Panc1 (cell line): ENCODE measurements at regions of chr11 and their contacts with region 1.

Region 1: GRCh38 chr11:9265211-9266131 is at the start of gene DENND5A:
- DNase-seq: peak; percentile 27
- ATAC-seq: peak; percentile 93
- H3K4me3 ChIP-seq: peak within 1 kb of the TSS; percentile 74 to 98
- H3K27ac ChIP-seq: peak within 1 kb of the TSS; percentile 92
- H3K4me1 ChIP-seq: peaks cover 30% of the 10 kb centered on the region
- H3K27me3 ChIP-seq: no peaks in the 10 kb centered on the region
- CTCF ChIP-seq: no peak; the same call in 1 of the 2 replicates
- total RNA-seq, gene DENND5A: 136 TPM

Region 2: GRCh38 chr11:9203691-9204311 is 61.7 kb before region 1 on chr11:
- CTCF ChIA-PET with region 1: no interaction called
- POLR2A ChIA-PET with region 1: no interaction called
- in situ Hi-C with region 1: no loop called
- intact Hi-C with region 1: no loop called
- DNase-seq: no peak
- ATAC-seq: peak; percentile 54; the same call in 1 of the 2 replicates
- H3K4me3 ChIP-seq: no peak overlapping the region
- H3K27ac ChIP-seq: no peak overlapping the region
- H3K4me1 ChIP-seq: no peaks in the 10 kb centered on the region
- H3K27me3 ChIP-seq: no peaks in the 10 kb centered on the region
- CTCF ChIP-seq: no peak

Region 3: GRCh38 chr11:9254416-9254815 is 11.1 kb before region 1 on chr11:
- CTCF ChIA-PET with region 1: interaction called, 3 read pairs
- POLR2A ChIA-PET with region 1: interaction called, 12 read pairs
- in situ Hi-C with region 1: no loop called
- intact Hi-C with region 1: no loop called
- DNase-seq: no peak
- ATAC-seq: no peak
- H3K4me3 ChIP-seq: no peak overlapping the region
- H3K27ac ChIP-seq: no peak overlapping the region
- H3K4me1 ChIP-seq: peaks cover 14% of the 10 kb centered on the region
- H3K27me3 ChIP-seq: no peaks in the 10 kb centered on the region
- CTCF ChIP-seq: no peak

Region 4: GRCh38 chr11:9320047-9320446 is 54.6 kb after region 1 on chr11:
- CTCF ChIA-PET with region 1: no interaction called
- POLR2A ChIA-PET with region 1: interaction called, 10 read pairs
- in situ Hi-C with region 1: no loop called
- intact Hi-C with region 1: no loop called
- DNase-seq: no peak
- ATAC-seq: no peak
- H3K4me3 ChIP-seq: no peak overlapping the region
- H3K27ac ChIP-seq: no peak overlapping the region
- H3K4me1 ChIP-seq: peaks cover 12% of the 10 kb centered on the region; the same call in 1 of the 2 replicates
- H3K27me3 ChIP-seq: no peaks in the 10 kb centered on the region
- CTCF ChIP-seq: no peak

Region 5: DNA sequence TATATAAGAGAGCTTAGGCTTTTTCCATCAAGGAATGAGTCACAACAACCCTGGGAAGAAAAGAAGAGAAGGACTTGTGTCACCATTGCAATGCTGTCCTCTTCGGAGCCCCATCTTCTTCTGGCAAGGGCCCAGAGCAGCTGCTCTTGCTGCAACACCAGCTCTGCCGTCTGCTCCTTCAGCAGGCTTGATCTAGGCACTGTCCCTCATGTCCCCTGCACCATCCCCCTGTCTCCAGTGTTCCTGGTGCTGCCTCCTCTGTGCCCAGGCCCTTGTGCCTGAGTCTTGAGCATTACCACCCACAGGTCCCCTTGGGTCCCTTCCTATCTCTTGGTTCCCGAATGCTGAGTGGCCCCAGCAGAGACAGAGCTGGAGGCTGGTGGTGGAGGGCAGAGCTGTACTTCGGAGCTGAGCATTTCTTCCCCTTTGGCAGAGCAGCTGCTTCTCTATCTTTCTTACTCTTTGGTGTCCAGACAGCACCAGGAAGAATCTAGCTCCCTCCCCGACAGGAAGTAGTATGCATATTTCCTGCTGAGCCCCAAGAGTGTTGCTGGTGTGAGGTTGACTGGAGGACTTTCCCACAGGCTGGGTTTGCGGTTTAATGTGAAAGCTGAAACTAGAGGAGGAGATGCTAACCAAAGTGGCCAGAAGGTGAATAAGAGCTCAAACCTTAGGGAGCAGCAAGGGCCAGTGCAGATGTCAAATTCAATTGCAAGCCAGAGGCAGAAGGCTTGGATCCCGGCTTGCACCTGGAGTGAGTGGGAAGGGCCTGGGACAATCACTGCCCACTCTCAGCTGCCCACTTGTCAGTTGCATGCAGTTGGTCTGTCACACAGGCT is 335.8 kb after region 1 on chr11:
- CTCF ChIA-PET with region 1: no interaction called
- POLR2A ChIA-PET with region 1: no interaction called
- in situ Hi-C with region 1: no loop called
- intact Hi-C with region 1: no loop called
- DNase-seq: no peak
- ATAC-seq: peak; percentile 40
- H3K4me3 ChIP-seq: no peak overlapping the region
- H3K27ac ChIP-seq: peak overlapping the region; percentile 12; the same call in 1 of the 2 replicates
- H3K4me1 ChIP-seq: no peaks in the 10 kb centered on the region
- H3K27me3 ChIP-seq: no peaks in the 10 kb centered on the region
- CTCF ChIP-seq: no peak